Naive thymus-derived CD4-positive, alpha-beta T cell (primary cell): ENCODE measurements at regions of chr13 and their contacts with region 1.

Region 1: GRCh38 chr13:98509271-98510155 is 67.4 kb downstream of the STK24 start:
- DNase-seq: peak in 2 of 9 donors; percentile 21 to 43
- ATAC-seq: peak; percentile 91
- H3K4me3 ChIP-seq: no peak overlapping the region
- H3K4me3 Mint-ChIP-seq: peak overlapping the region; percentile 18 to 70 (median 28)
- H3K27ac ChIP-seq: no peak overlapping the region
- H3K27ac Mint-ChIP-seq: peak overlapping the region; percentile 18 to 79 (median 72)
- H3K4me1 ChIP-seq: peaks cover 32 to 34% of the 10 kb centered on the region in 2 donors
- H3K4me1 Mint-ChIP-seq: peaks cover 63 to 99% (median 96%) of the 10 kb centered on the region in 7 donors
- H3K27me3 ChIP-seq: no peaks in the 10 kb centered on the region
- H3K27me3 Mint-ChIP-seq: no peaks in the 10 kb centered on the region

Region 2: DNA sequence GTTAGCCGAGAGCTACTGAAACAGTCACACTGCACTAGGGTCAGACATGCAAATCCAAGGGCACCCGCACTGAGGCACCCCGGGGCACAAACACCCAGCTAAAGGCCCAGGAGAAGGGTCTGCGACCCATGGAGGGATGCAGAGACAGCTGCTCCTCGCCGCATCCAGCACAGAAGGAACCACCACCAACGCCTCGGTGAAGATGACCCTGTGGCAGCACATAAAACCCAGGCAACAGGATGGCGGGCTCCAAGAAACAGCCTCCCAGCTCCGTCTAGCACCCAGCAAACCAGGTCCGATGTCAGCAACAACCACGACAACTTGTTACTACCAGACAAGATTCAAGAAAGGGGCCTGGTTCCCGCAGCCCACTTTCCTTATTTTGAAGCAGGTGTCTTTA is 14.7 kb before region 1 on chr13:
- CTCF ChIA-PET with region 1: no interaction called
- POLR2A ChIA-PET with region 1: no interaction called
- intact Hi-C with region 1: loop called in 1 of 2 experiments (anchors 1 kb)
- DNase-seq: no peak
- ATAC-seq: no peak
- H3K4me3 ChIP-seq: no peak overlapping the region
- H3K4me3 Mint-ChIP-seq: no peak overlapping the region
- H3K27ac ChIP-seq: no peak overlapping the region
- H3K27ac Mint-ChIP-seq: peak overlapping the region in 3 of 9 donors; percentile 9 to 54 (median 43)
- H3K4me1 ChIP-seq: peaks cover 6 to 18% of the 10 kb centered on the region in 2 donors
- H3K4me1 Mint-ChIP-seq: peaks cover 47 to 90% (median 81%) of the 10 kb centered on the region in 7 donors
- H3K27me3 ChIP-seq: no peaks in the 10 kb centered on the region
- H3K27me3 Mint-ChIP-seq: no peaks in the 10 kb centered on the region

Region 3: DNA sequence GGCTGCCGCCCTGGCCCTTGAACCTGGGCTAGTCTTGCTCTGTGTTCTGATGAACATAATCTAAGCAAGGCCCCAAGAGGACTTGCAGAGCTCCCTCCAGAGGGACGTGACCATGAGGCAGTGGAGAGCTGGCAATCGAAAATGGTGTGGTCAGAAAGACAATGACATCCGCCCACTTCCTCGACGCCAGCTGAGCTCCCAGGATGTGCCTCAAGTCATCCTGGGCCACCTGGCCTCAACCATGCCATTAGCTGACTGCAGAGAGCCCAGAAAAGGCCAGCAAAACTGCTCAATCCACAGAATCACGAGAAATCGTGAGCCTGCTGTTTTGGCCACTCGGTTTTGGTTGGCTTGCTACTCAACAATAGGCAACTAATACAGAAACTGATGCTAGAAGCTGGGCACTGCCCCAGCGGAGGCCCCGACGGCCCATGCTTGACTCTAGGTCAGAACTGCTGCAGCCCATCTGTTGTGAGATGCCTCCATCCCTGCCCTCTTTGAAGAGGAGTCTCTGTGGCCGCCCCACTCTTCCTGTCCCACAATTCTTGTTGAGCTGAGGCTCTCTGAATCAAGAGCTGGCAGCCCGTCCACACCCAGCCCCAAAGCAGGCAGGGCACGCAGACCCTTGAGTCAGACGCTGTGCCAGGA is 14.1 kb after region 1 on chr13:
- CTCF ChIA-PET with region 1: no interaction called
- POLR2A ChIA-PET with region 1: interaction called, 4 read pairs
- intact Hi-C with region 1: loop called in 1 of 2 experiments (anchors 2 kb)
- DNase-seq: no peak
- ATAC-seq: no peak
- H3K4me3 ChIP-seq: no peak overlapping the region
- H3K4me3 Mint-ChIP-seq: peak overlapping the region in 8 of 10 donors; percentile 13 to 53 (median 40)
- H3K27ac ChIP-seq: no peak overlapping the region
- H3K27ac Mint-ChIP-seq: peak overlapping the region; percentile 33 to 86 (median 75)
- H3K4me1 ChIP-seq: peaks cover 48 to 59% of the 10 kb centered on the region in 2 donors
- H3K4me1 Mint-ChIP-seq: peaks cover 64 to 96% (median 91%) of the 10 kb centered on the region in 7 donors
- H3K27me3 ChIP-seq: no peaks in the 10 kb centered on the region
- H3K27me3 Mint-ChIP-seq: no peaks in the 10 kb centered on the region